Colonic mucosa (tissue), 4 donors: ENCODE measurements at regions of chr1 and their contacts with region 1.

Region 1: GRCh38 chr1:35930593-35931445 is at the start of gene AGO3:
- DNase-seq: peak; percentile 84
- H3K4me3 ChIP-seq: peak within 1 kb of the TSS; percentile 89
- H3K27ac ChIP-seq: peak within 1 kb of the TSS; percentile 96
- H3K4me1 ChIP-seq: peaks cover 4% of the 10 kb centered on the region
- H3K27me3 ChIP-seq: no peaks in the 10 kb centered on the region
- CTCF ChIP-seq: no peak
- total RNA-seq, gene AGO3: 16.7 to 21.4 TPM

Region 2: GRCh38 chr1:35857830-35858229 is 73.0 kb before region 1 on chr1:
- intact Hi-C with region 1: no loop called
- DNase-seq: no peak
- H3K4me3 ChIP-seq: no peak overlapping the region
- H3K27ac ChIP-seq: no peak overlapping the region
- H3K4me1 ChIP-seq: no peaks in the 10 kb centered on the region
- H3K27me3 ChIP-seq: no peaks in the 10 kb centered on the region
- CTCF ChIP-seq: peak; percentile 11

Region 3: DNA sequence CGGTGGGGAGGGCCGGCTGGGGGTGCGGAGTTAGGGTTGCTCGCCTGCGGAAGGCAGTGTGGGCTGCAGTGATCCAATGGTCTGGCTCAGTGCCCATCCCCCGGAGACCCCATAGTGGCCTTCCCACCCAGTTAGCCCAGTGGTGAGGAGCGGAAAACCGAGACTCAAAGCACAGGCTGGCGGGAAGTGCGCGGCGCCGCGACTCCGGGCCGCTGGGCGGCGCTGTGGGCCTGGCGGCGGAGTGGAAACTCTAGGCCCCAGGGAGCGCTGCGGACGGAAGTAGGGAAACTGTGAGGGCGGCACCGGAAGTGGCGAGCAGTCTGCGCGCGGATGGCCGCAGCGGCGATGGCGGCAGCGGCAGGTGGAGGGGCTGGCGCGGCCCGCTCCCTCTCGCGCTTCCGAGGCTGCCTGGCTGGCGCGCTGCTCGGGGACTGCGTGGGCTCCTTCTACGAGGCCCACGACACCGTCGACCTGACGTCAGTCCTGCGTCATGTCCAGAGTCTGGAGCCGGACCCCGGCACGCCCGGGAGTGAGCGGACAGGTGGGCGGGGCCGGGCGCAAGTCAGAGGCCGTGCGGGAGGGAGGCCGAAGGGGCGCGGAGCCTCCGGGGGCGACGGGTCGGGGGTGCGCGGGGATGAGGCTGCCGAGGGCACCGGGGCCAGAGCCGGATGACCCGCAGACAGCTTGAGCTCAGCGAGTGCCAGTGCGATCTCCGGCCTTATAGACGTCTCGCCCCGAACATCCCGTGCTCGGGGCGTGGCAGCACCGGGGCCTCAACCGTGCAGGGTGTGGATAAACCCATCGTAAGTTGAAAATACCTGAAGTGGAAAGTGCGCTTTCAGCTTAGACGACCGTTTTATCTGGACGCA is 158.0 kb after region 1 on chr1 and contains the start of gene ADPRS:
- intact Hi-C with region 1: loop called (anchors 10 kb)
- DNase-seq: peak; percentile 87
- H3K4me3 ChIP-seq: peak within 1 kb of the TSS; percentile 96
- H3K27ac ChIP-seq: peak within 1 kb of the TSS; percentile 83
- H3K4me1 ChIP-seq: no peaks in the 10 kb centered on the region
- H3K27me3 ChIP-seq: no peaks in the 10 kb centered on the region
- CTCF ChIP-seq: peak; percentile 97
- total RNA-seq, gene ADPRS: 30.4 to 33.0 TPM

Region 4: GRCh38 chr1:36099681-36100341 is 169.0 kb after region 1 on chr1:
- intact Hi-C with region 1: no loop called
- DNase-seq: peak; percentile 82
- H3K4me3 ChIP-seq: no peak overlapping the region
- H3K27ac ChIP-seq: no peak overlapping the region
- H3K4me1 ChIP-seq: no peaks in the 10 kb centered on the region
- H3K27me3 ChIP-seq: no peaks in the 10 kb centered on the region
- CTCF ChIP-seq: peak; percentile 87